ENCODE measurements at regions of chr1 and their contacts with region 1.

Region 1: DNA sequence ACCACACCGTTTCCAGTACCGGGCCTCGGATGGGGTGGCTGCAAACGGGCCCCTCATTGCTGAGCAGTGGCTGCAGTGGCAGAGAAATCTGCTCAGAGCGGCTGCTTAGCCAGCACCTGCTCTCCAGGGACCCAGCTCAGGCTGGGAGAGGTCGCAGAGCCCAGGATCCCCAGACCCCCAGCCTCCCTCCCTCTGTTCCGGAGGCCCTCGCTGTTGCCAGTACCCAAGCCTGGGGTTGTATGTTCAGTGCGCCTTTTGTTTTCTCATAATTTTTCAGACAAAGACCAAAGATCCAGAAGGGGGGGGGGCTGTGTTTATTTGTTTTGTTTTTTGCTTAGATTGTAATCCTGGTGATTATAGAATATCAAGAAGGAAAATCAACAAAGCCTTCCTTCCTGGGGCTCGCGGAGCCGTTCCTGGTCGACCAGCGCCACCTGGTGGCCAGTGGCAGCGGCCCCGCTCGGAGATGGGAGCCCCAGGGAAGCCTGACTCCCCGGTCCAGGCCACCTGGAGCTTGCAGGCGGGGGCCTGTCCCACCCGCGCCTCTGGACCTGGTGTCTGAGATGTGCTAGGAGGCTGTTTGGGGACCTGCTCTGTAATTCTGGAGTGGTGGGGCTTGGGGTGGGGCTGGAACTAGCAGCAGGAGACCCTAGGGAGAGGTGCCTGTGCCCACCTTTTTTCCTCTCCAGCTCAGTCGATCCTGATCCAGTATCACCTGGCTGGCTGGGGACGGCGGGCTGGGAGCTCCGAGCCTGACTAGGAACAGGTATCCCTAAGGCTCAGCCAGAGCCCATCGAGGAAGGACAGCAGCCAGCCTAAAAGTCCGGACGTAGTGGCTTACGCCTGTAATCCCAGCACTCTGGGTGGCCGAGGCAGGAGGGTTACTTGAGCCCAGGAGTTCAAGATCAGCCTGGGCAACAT is 123.9 kb upstream of the VAMP3 start:
- DNase-seq: peak; percentile 59
- ATAC-seq: no peak
- H3K4me3 Mint-ChIP-seq: no peak overlapping the region
- H3K27ac Mint-ChIP-seq: no peak overlapping the region
- H3K4me1 Mint-ChIP-seq: no peaks in the 10 kb centered on the region
- H3K27me3 Mint-ChIP-seq: no peaks in the 10 kb centered on the region
- CTCF ChIP-seq: peak; percentile 45

Region 2: DNA sequence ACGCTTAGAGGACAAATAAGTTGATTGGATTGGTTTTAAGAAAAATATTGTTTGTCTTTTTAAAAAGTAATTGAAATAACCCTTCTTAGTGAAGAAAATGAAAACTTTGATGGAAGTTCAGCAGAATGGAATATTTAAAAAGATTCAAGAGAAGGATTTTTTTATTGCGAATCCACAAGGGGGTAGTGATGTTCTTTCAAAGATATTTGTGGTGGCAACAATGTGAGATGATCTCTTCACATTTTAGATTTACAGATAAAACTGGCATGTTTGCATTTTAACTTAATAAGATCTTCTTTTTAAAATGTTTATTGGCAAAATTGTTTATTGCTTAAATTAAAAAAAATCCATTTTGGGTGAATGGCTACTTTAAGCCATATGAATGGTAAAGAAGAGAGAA is 853.1 kb before region 1 on chr1:
- CTCF ChIA-PET with region 1: no interaction called
- POLR2A ChIA-PET with region 1: no interaction called
- intact Hi-C with region 1: loop called (anchors 10 kb)
- DNase-seq: no peak
- ATAC-seq: no peak
- H3K4me3 Mint-ChIP-seq: no peak overlapping the region
- H3K27ac Mint-ChIP-seq: no peak overlapping the region
- H3K4me1 Mint-ChIP-seq: peaks cover 27% of the 10 kb centered on the region
- H3K27me3 Mint-ChIP-seq: no peaks in the 10 kb centered on the region
- CTCF ChIP-seq: no peak

Region 3: DNA sequence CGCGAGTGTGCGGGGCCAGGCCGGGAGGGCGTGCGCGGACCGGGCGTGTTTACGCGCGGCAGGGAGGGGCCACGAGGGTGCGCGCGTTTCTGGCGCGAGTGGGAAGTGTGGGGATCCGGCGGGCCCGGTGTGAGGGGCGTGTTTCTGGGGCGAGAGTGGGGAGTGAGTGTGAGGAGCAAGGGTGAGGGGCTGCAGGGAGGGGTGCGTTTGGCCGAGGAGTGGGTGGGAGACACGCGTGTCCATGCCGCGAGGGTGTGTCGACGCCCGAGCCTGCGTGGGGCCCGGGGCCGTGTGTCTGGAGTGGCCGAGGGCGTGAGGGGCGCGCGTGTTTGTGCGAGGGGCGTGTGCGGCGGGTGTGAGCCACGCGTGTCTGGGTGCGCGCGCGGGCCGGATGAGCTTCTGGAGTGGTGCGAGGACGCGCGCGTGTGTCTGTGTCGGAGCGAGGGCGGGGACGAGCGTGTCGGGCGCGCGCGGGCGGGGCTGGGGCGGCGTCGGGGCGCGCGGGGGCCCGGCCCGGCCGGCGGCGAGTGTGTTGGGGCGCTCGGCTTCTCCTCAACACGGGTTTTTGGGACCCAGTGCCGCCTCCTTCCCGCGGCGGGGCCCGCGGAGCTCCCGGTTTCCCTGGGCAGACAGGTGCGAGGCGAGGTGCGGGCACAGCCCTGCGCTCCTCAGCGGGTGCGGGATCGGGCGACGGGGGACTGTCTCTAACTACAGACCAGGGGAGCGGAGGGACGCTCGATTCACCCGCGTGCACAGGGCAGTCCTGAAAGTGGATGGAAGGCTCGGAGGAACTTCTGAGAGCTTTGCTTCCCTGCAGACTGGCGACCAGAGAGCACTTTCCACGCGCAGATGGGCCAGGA is 58.0 kb after region 1 on chr1:
- CTCF ChIA-PET with region 1: no interaction called
- POLR2A ChIA-PET with region 1: no interaction called
- intact Hi-C with region 1: no loop called
- DNase-seq: peak; percentile 36
- ATAC-seq: no peak
- H3K4me3 Mint-ChIP-seq: peak overlapping the region; percentile 82
- H3K27ac Mint-ChIP-seq: peak overlapping the region; percentile 70
- H3K4me1 Mint-ChIP-seq: peaks cover 12% of the 10 kb centered on the region
- H3K27me3 Mint-ChIP-seq: peaks cover 11% of the 10 kb centered on the region
- CTCF ChIP-seq: no peak

Measured in activated B cell treated with CpG ODN at 0.5 μM for 24 hours (primary cell).